ENCODE measurements at regions of chr1 and their contacts with region 1.

Region 1: DNA sequence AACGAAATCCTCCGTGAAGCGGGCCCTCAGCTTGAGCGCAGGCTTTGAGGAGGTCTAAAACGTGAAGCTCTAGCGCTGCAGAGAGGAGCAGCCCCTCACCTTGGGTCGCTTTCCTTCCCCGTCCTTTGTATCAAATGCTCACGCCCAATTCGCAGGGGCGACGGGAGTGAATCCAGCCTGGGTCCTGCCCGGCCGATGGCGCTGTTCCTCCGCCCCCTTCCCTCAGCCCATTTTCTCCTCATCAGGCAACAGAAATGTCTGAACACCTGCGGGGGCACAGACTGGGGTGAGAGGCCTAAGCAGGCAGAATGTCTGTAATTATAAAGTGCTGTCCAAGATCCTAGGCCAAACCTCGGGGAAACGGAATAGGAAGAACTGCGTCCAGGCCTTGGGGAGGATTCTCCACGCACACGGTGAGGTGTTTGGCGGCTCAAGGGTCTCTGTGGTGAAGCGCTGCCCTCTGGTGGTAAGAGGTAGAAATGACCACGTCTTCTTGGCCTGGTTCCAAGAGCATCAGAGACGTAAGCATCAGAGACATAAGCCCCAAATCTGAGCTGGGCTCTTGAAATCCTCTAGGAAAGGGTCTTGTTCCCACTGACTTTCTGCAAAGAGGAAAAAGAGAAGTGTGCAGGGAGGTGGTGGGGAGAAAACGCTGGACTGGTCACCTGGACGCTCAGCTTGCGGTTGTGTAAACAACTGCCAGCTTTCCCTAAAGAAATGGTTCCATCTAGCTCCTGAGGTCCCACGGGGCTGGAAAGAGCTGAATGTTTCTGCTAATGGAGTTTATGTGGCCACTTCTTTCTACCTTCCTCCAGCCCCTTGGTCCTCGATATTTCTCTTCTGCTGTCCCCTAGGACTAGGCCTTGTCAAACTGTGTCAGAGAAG is 92.1 kb upstream of the CD53 start:
- DNase-seq: peak; percentile 40
- ATAC-seq: peak; percentile 58; the same call in 2 of the 3 replicates
- H3K4me3 ChIP-seq: no peak overlapping the region
- H3K27ac ChIP-seq: no peak overlapping the region
- H3K4me1 ChIP-seq: no peaks in the 10 kb centered on the region
- H3K27me3 ChIP-seq: 0 out of 5 replicates have a peak, but pooled peaks cover 0 to 1% of the 10 kb centered on the region in 2 experiments
- CTCF ChIP-seq: peak; percentile 78
- EP300 ChIP-seq: no peak
- POLR2A ChIP-seq: no peak
- RAD21 ChIP-seq: 0 out of 2 replicates have a peak, but pooled peaks have one; percentile 15

Region 2: GRCh38 chr1:110538075-110538474 is 242.8 kb before region 1 on chr1:
- CTCF ChIA-PET with region 1: no interaction called
- POLR2A ChIA-PET with region 1: no interaction called
- in situ Hi-C with region 1: loop called (anchors 10 kb)
- intact Hi-C with region 1: no loop called
- DNase-seq: no peak
- ATAC-seq: no peak
- H3K4me3 ChIP-seq: no peak overlapping the region
- H3K27ac ChIP-seq: no peak overlapping the region
- H3K4me1 ChIP-seq: no peaks in the 10 kb centered on the region
- H3K27me3 ChIP-seq: peaks cover 0 to 1% of the 10 kb centered on the region in 2 experiments; a peak in 1 of 5 replicates
- CTCF ChIP-seq: no peak
- EP300 ChIP-seq: no peak
- POLR2A ChIP-seq: no peak
- RAD21 ChIP-seq: no peak

Region 3: DNA sequence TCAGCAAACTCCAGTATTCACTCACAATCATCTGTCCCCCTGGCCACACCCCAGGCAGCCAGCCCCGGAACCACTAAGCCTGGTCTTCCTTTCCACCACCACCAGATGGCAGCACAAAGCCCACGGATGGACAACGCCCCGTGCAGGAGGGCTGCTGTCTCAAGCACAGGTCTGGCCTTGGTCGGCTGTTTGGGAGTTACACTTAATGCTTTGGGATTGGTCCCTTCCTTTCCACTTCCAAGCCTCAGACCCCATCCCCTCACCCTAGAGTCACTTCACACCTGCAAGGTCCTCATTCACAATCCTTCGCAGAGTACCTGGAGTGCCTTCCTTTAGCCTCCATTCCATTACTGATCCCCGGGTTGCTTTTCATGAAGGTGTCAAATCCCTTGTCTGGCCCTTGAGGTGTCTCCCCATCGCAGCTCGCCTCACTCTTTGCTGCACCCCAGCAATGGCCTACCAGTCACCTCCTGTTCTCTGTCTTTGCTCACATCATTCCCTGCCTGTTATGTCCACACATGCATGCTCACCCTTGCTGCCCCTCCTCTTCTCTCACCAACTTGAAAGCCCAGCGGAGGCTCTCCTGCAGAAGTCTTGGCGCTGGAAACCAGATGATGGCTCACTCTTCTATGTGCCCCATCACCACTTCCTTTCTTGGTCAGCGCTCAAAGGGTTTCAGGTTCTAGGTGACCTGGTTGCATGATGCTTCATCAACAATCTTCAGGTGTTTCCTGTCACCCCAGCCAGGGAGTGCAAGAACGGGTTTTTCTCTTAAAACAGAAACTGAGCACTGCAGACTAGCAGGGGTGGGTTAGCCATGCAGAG is 149.8 kb before region 1 on chr1:
- CTCF ChIA-PET with region 1: interaction called, 10 read pairs
- POLR2A ChIA-PET with region 1: no interaction called
- in situ Hi-C with region 1: no loop called
- intact Hi-C with region 1: loop called (anchors 1 kb)
- DNase-seq: peak; percentile 40
- ATAC-seq: peak; percentile 99
- H3K4me3 ChIP-seq: no peak overlapping the region
- H3K27ac ChIP-seq: no peak overlapping the region
- H3K4me1 ChIP-seq: no peaks in the 10 kb centered on the region
- H3K27me3 ChIP-seq: no peaks in the 10 kb centered on the region; a peak in 2 of 5 replicates
- CTCF ChIP-seq: peak; percentile 93
- EP300 ChIP-seq: no peak
- POLR2A ChIP-seq: no peak
- RAD21 ChIP-seq: peak; percentile 55; the same call in 1 of the 2 replicates

Measured in HepG2 (cell line).